CD4-positive, alpha-beta T cell (primary cell): ENCODE measurements at regions of chr10 and their contacts with region 1.

Region 1: GRCh38 chr10:116627386-116627933 is 6.7 kb downstream of the PNLIPRP2 start:
- DNase-seq: no peak
- ATAC-seq: no peak
- H3K4me3 ChIP-seq: no peak overlapping the region
- H3K4me3 Mint-ChIP-seq: no peak overlapping the region
- H3K27ac ChIP-seq: no peak overlapping the region
- H3K27ac Mint-ChIP-seq: no peak overlapping the region
- H3K4me1 ChIP-seq: no peaks in the 10 kb centered on the region
- H3K4me1 Mint-ChIP-seq: no peaks in the 10 kb centered on the region
- H3K27me3 ChIP-seq: peaks cover 13 to 20% of the 10 kb centered on the region in 2 experiments
- H3K27me3 Mint-ChIP-seq: peaks cover 61% of the 10 kb centered on the region
- CTCF ChIP-seq: no peak

Region 2: GRCh38 chr10:115082506-115082905 is 1545.0 kb before region 1 on chr10:
- CTCF ChIA-PET with region 1: no interaction called
- POLR2A ChIA-PET with region 1: no interaction called
- intact Hi-C with region 1: loop called in 1 of 2 experiments (anchors 10 kb)
- DNase-seq: no peak
- ATAC-seq: no peak
- H3K4me3 ChIP-seq: no peak overlapping the region
- H3K4me3 Mint-ChIP-seq: no peak overlapping the region
- H3K27ac ChIP-seq: no peak overlapping the region
- H3K27ac Mint-ChIP-seq: no peak overlapping the region
- H3K4me1 ChIP-seq: no peaks in the 10 kb centered on the region
- H3K4me1 Mint-ChIP-seq: no peaks in the 10 kb centered on the region
- H3K27me3 ChIP-seq: no peaks in the 10 kb centered on the region
- H3K27me3 Mint-ChIP-seq: peaks cover 22% of the 10 kb centered on the region
- CTCF ChIP-seq: no peak

Region 3: GRCh38 chr10:116691635-116692034 is 64.2 kb after region 1 on chr10:
- CTCF ChIA-PET with region 1: no interaction called
- POLR2A ChIA-PET with region 1: no interaction called
- intact Hi-C with region 1: no loop called
- DNase-seq: no peak
- ATAC-seq: no peak
- H3K4me3 ChIP-seq: no peak overlapping the region
- H3K4me3 Mint-ChIP-seq: no peak overlapping the region
- H3K27ac ChIP-seq: no peak overlapping the region
- H3K27ac Mint-ChIP-seq: no peak overlapping the region
- H3K4me1 ChIP-seq: no peaks in the 10 kb centered on the region
- H3K4me1 Mint-ChIP-seq: no peaks in the 10 kb centered on the region
- H3K27me3 ChIP-seq: peaks cover 10 to 16% of the 10 kb centered on the region in 2 experiments
- H3K27me3 Mint-ChIP-seq: peaks cover 69% of the 10 kb centered on the region
- CTCF ChIP-seq: no peak